ENCODE measurements at regions of chr13 and their contacts with region 1.

Region 1: DNA sequence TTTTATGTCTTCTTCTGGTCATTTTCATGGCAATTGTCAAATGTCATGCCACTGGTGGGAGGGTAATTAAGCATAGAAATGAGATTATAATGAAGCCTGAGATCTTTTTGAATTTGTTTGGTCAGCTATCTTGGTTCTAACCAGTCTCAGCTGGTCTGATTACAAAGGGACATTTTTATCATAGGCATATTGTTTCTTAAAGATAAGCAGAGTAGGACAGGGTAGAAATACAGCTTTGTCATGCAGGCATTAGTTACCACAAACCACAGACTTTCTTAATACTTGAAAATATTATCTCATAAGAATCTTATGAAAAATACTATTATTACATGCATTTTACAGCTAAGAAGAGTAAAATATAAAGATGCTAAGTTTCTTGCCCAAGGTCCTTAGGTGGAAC is 1761.5 kb downstream of the PCDH9 start:
- DNase-seq: no peak
- H3K4me3 ChIP-seq: no peak overlapping the region
- H3K4me3 Mint-ChIP-seq: no peak overlapping the region
- H3K27ac Mint-ChIP-seq: no peak overlapping the region
- H3K4me1 ChIP-seq: no peaks in the 10 kb centered on the region
- H3K4me1 Mint-ChIP-seq: no peaks in the 10 kb centered on the region
- H3K27me3 ChIP-seq: no peaks in the 10 kb centered on the region
- H3K27me3 Mint-ChIP-seq: no peaks in the 10 kb centered on the region
- CTCF ChIP-seq: no peak

Region 2: GRCh38 chr13:65497265-65497664 is 28.6 kb after region 1 on chr13:
- CTCF ChIA-PET with region 1: no interaction called
- POLR2A ChIA-PET with region 1: no interaction called
- intact Hi-C with region 1: loop called (anchors 1 kb)
- DNase-seq: peak in 1 of 2 experiments; percentile 2
- H3K4me3 ChIP-seq: no peak overlapping the region
- H3K4me3 Mint-ChIP-seq: no peak overlapping the region
- H3K27ac Mint-ChIP-seq: no peak overlapping the region
- H3K4me1 ChIP-seq: no peaks in the 10 kb centered on the region
- H3K4me1 Mint-ChIP-seq: no peaks in the 10 kb centered on the region
- H3K27me3 ChIP-seq: no peaks in the 10 kb centered on the region
- H3K27me3 Mint-ChIP-seq: no peaks in the 10 kb centered on the region
- CTCF ChIP-seq: no peak